CD4-positive, alpha-beta memory T cell (primary cell): ENCODE measurements at regions of chr19 and their contacts with region 1.

Region 1: DNA sequence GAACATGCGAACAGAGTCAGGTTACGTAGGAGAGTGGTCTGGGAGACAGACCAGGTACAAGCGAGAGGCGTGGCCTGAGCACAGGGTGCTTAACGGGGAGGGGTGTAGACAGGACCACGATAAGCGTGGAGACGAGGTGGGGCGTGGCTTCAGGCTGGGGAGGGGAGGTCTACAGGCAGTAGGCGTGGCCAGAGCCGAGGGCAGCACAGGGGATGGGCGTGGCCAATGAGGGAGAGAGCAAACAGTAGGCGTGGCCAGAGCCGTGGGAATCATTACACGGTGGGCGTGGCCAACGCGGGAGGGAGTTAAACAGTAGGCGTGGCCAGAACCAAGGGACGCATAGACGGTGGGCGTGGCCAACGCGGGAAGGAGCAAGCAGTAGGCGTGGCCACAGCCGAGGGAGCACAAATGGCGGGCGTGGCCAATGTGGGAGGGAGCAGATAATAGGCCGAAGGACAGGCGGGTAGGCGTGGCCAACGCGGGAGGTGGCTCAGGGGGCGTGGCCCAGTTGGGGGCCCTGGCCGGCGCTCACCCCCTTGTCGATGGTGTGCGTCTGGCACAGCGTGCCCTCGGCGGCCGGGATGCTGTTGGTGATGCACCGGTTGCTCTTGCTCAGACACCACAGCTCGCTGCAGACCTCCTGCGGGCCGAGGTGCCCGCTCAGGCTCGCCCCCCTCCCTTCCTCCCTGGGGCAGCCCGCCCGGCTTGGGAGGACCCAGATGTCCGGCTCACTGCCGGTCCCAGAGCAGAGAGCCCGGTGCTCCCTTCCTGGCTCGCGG is 15.2 kb upstream of the MYO1F start:
- DNase-seq: peak; percentile 96 to 97 (median 96)
- H3K4me3 ChIP-seq: peak overlapping the region; percentile 18 to 73
- H3K4me3 Mint-ChIP-seq: peak overlapping the region; percentile 82 to 90 (median 88)
- H3K27ac ChIP-seq: no peak overlapping the region
- H3K27ac Mint-ChIP-seq: peak overlapping the region; percentile 75 to 95 (median 90)
- H3K4me1 ChIP-seq: peaks cover 19% of the 10 kb centered on the region
- H3K4me1 Mint-ChIP-seq: peaks cover 16 to 30% (median 22%) of the 10 kb centered on the region in 4 donors
- H3K27me3 ChIP-seq: no peaks in the 10 kb centered on the region
- H3K27me3 Mint-ChIP-seq: no peaks in the 10 kb centered on the region

Region 2: GRCh38 chr19:8609279-8610040 is 17.0 kb after region 1 on chr19:
- CTCF ChIA-PET with region 1: interaction called, 11 read pairs
- POLR2A ChIA-PET with region 1: interaction called, 5 read pairs
- intact Hi-C with region 1: loop called (anchors 2 kb)
- DNase-seq: no peak
- H3K4me3 ChIP-seq: peak overlapping the region; percentile 80 to 94
- H3K4me3 Mint-ChIP-seq: peak overlapping the region; percentile 94 to 99 (median 96)
- H3K27ac ChIP-seq: peak overlapping the region; percentile 17
- H3K27ac Mint-ChIP-seq: peak overlapping the region; percentile 70 to 98 (median 90)
- H3K4me1 ChIP-seq: peaks cover 28% of the 10 kb centered on the region
- H3K4me1 Mint-ChIP-seq: peaks cover 15 to 48% (median 38%) of the 10 kb centered on the region in 4 donors
- H3K27me3 ChIP-seq: no peaks in the 10 kb centered on the region
- H3K27me3 Mint-ChIP-seq: no peaks in the 10 kb centered on the region